ENCODE measurements at regions of chr12 and their contacts with region 1.

Region 1: DNA sequence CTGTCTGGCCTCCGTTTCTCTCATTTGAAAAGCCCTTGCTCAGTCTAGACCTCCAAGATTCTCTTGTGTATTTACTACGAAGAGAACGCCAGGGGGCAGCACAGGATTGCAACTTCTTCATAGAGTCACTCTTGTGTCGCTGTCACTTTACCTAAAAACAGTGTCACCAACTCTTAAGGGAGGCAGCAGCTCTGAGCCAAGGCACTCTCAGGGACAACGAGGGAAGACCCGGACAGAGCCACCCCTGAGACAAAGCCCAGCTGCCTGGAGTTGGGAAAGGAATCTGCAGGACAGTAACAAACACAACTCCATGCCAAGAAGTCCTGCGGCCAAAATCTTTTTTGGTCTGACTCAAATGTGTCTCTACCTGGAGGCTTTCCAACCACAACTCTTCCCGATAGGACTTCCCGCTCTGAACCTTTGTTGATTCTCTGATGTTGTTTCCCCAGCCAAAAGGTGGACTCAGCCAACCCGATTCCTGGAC is 9.6 kb upstream of the RPAP3 start:
- DNase-seq: peak; percentile 64 to 91 (median 78)
- ATAC-seq: peak; percentile 72
- H3K4me3 ChIP-seq: no peak overlapping the region
- H3K4me3 Mint-ChIP-seq: peak overlapping the region; percentile 48
- H3K27ac ChIP-seq: no peak overlapping the region
- H3K27ac Mint-ChIP-seq: peak overlapping the region; percentile 21
- H3K4me1 ChIP-seq: peaks cover 31% of the 10 kb centered on the region
- H3K4me1 Mint-ChIP-seq: peaks cover 26% of the 10 kb centered on the region
- H3K27me3 ChIP-seq: no peaks in the 10 kb centered on the region
- H3K27me3 Mint-ChIP-seq: no peaks in the 10 kb centered on the region
- CTCF ChIP-seq: peak; percentile 80

Region 2: GRCh38 chr12:47742253-47742825 is 26.9 kb after region 1 on chr12:
- CTCF ChIA-PET with region 1: interaction called, 10 read pairs
- POLR2A ChIA-PET with region 1: interaction called, 5 read pairs
- intact Hi-C with region 1: loop called in 1 of 2 experiments (anchors 2 kb)
- DNase-seq: peak; percentile 57 to 83 (median 68)
- ATAC-seq: peak; percentile 38
- H3K4me3 ChIP-seq: no peak overlapping the region
- H3K4me3 Mint-ChIP-seq: no peak overlapping the region
- H3K27ac ChIP-seq: no peak overlapping the region
- H3K27ac Mint-ChIP-seq: no peak overlapping the region
- H3K4me1 ChIP-seq: peaks cover 38% of the 10 kb centered on the region
- H3K4me1 Mint-ChIP-seq: peaks cover 42% of the 10 kb centered on the region
- H3K27me3 ChIP-seq: no peaks in the 10 kb centered on the region
- H3K27me3 Mint-ChIP-seq: no peaks in the 10 kb centered on the region
- CTCF ChIP-seq: peak; percentile 100

Region 3: DNA sequence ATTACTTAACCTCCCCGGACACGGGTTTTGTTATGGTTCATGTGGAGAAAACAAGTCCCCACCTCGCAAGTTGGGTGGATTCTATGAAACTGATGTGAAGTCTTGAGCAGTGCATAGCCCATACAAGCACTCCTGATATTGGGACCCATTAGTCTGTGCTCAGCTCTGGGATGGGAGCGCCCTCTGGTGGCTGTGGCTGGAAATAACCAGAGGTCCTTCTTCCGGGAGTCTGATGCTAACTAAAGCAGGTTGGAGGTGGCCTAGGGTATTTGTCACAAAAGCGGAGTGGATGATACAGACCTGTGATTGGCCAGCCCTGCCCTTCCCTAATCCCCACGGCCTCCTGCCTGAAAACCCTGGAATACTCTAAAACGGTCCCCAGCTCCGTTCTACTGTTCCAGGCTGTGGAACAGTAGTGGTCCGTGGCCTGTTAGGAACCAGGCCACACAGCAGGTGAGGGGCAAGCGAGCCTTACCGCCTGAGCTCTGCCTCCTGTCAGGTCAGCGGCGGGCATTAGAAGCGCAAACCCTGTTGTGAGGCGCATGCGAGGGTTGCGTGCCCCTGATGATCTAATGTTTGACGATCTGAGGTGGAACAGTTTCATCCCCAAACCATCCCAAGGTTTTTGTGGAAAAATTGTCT is 64.0 kb after region 1 on chr12:
- CTCF ChIA-PET with region 1: interaction called, 6 read pairs
- POLR2A ChIA-PET with region 1: interaction called, 5 read pairs
- intact Hi-C with region 1: loop called (anchors 1 to 2 kb)
- DNase-seq: peak; percentile 85 to 98 (median 92)
- ATAC-seq: peak; percentile 99
- H3K4me3 ChIP-seq: no peak overlapping the region
- H3K4me3 Mint-ChIP-seq: peak overlapping the region; percentile 26
- H3K27ac ChIP-seq: no peak overlapping the region
- H3K27ac Mint-ChIP-seq: peak overlapping the region; percentile 61
- H3K4me1 ChIP-seq: peaks cover 27% of the 10 kb centered on the region
- H3K4me1 Mint-ChIP-seq: peaks cover 20% of the 10 kb centered on the region
- H3K27me3 ChIP-seq: no peaks in the 10 kb centered on the region
- H3K27me3 Mint-ChIP-seq: no peaks in the 10 kb centered on the region
- CTCF ChIP-seq: peak; percentile 86

Region 4: DNA sequence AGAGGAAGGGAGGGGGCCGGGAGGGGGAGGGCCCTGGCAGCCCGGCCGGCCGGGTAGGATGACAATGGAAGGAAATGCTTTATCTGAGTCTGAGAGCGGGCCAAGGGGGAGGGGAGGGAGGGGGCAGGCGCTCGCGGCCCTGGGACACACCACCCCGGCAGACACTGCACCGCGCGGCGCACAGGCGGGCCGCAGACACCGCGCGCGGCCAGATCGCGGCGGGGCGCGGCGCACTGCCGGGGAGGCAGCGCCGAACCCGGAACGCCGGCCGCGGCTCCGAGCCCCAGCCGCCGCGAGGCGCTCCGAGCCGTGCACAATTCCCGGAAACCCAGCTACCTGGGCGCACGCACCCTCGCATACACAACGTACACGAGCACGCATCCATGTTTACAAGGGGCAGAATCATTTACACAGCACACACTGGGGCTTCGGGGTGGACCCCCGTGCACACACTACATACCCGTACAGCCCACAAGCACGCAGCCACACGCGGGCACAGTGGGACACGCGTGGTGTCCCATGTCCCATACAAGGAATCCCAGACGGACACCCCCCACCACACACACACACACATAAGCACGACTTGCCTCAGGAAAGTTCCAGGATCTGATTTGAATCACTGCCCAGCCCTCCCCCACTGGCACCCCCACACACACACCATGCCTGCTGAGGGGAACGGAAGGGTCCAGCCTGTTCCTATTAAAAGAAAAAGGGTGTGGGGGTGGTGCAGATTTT is 104.6 kb after region 1 on chr12 and contains the start of gene HDAC7:
- CTCF ChIA-PET with region 1: no interaction called
- POLR2A ChIA-PET with region 1: no interaction called
- intact Hi-C with region 1: no loop called
- DNase-seq: peak in 13 of 14 experiments; percentile 62 to 90 (median 78)
- ATAC-seq: peak; percentile 59
- H3K4me3 ChIP-seq: peak within 1 kb of the TSS; percentile 89
- H3K4me3 Mint-ChIP-seq: peak within 1 kb of the TSS; percentile 98
- H3K27ac ChIP-seq: peak within 1 kb of the TSS; percentile 84 to 89
- H3K27ac Mint-ChIP-seq: peak within 1 kb of the TSS; percentile 96
- H3K4me1 ChIP-seq: peaks cover 81% of the 10 kb centered on the region
- H3K4me1 Mint-ChIP-seq: peaks cover 89% of the 10 kb centered on the region
- H3K27me3 ChIP-seq: no peaks in the 10 kb centered on the region
- H3K27me3 Mint-ChIP-seq: no peaks in the 10 kb centered on the region
- CTCF ChIP-seq: no peak
- total RNA-seq, gene HDAC7: 116 to 122 TPM

Region 5: DNA sequence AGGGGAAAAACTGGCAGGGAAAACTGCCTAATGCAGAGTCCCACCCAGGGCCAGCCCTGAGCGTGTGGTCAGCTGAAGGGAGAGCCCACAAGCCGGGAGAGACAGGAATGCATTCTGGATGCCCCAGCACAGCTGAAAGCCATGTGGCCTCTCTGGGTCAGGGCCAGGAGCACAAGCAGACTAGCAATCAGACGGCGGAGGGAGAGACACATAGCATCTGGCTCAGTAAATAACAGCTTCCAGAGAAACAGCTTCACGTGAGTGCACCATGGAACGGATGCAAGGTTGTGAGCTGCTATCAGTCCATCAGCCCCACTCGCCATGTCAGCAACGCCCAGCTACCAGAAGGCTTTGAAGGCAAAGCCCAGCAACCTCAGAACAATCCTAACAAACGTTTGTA is 219.7 kb after region 1 on chr12:
- CTCF ChIA-PET with region 1: no interaction called
- POLR2A ChIA-PET with region 1: no interaction called
- intact Hi-C with region 1: no loop called
- DNase-seq: no peak
- ATAC-seq: no peak
- H3K4me3 ChIP-seq: no peak overlapping the region
- H3K4me3 Mint-ChIP-seq: no peak overlapping the region
- H3K27ac ChIP-seq: no peak overlapping the region
- H3K27ac Mint-ChIP-seq: no peak overlapping the region
- H3K4me1 ChIP-seq: no peaks in the 10 kb centered on the region
- H3K4me1 Mint-ChIP-seq: no peaks in the 10 kb centered on the region
- H3K27me3 ChIP-seq: no peaks in the 10 kb centered on the region
- H3K27me3 Mint-ChIP-seq: peaks cover 3% of the 10 kb centered on the region
- CTCF ChIP-seq: no peak

Region 6: GRCh38 chr12:47963340-47964040 is 248.1 kb after region 1 on chr12 and contains the start of gene TMEM106C:
- CTCF ChIA-PET with region 1: no interaction called
- POLR2A ChIA-PET with region 1: no interaction called
- intact Hi-C with region 1: loop called in 1 of 2 experiments (anchors 5 kb)
- DNase-seq: peak; percentile 84 to 97 (median 90)
- ATAC-seq: peak; percentile 97
- H3K4me3 ChIP-seq: peak within 1 kb of the TSS; percentile 85
- H3K4me3 Mint-ChIP-seq: peak within 1 kb of the TSS; percentile 95
- H3K27ac ChIP-seq: no peak within 1 kb of the TSS
- H3K27ac Mint-ChIP-seq: peak within 1 kb of the TSS; percentile 81
- H3K4me1 ChIP-seq: peaks cover 17% of the 10 kb centered on the region
- H3K4me1 Mint-ChIP-seq: peaks cover 38% of the 10 kb centered on the region
- H3K27me3 ChIP-seq: peaks cover 0 to 5% of the 10 kb centered on the region in 2 experiments
- H3K27me3 Mint-ChIP-seq: peaks cover 6% of the 10 kb centered on the region
- CTCF ChIP-seq: peak; percentile 97
- total RNA-seq, gene TMEM106C: 17.4 to 20.3 TPM

Region 7: DNA sequence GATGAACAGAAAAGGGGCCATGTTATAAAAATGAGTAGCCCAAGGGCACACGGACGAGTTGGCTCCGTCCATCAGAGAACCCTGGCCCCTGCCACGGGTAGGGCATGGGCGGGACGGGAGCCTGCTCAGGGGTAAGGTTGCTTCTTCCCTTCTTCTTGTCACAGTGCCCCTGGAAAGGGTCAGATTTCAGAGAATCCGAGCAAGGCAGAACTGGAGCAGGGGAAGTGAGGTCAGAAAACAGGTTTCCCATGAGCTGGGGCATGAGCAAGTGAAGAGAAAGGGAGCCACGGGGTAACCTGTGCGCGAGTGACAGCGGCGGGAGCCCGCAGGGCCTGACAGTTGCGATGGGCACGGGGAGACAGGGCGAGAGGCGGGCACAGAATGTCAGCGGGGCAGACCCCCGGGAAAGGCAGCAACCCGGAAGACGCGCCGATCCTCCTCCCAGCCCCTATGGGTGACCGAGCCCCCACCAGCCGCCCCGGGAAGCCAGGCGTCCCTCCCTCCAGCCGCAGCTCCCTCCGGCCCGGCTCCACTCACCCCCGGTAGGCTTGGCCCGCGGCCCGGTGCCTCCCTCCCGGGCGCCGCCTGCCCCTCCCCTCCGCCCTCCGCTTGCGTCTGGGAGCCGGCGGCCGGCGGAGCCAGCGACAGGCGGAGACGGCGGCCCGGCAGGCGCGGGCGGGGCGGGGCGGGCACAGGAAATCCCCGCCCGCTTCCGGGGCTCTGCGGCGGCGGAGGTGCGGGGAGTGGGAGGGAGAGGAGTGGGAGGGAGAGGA is 635.0 kb after region 1 on chr12 and contains the start of gene ZNF641:
- CTCF ChIA-PET with region 1: no interaction called
- POLR2A ChIA-PET with region 1: no interaction called
- intact Hi-C with region 1: loop called in 1 of 2 experiments (anchors 10 kb)
- DNase-seq: peak; percentile 68 to 94 (median 80)
- ATAC-seq: peak; percentile 88
- H3K4me3 ChIP-seq: peak within 1 kb of the TSS; percentile 96
- H3K4me3 Mint-ChIP-seq: peak within 1 kb of the TSS; percentile 97
- H3K27ac ChIP-seq: peak within 1 kb of the TSS; percentile 70 to 81
- H3K27ac Mint-ChIP-seq: peak within 1 kb of the TSS; percentile 98
- H3K4me1 ChIP-seq: peaks cover 19% of the 10 kb centered on the region
- H3K4me1 Mint-ChIP-seq: peaks cover 47% of the 10 kb centered on the region
- H3K27me3 ChIP-seq: no peaks in the 10 kb centered on the region
- H3K27me3 Mint-ChIP-seq: no peaks in the 10 kb centered on the region
- CTCF ChIP-seq: no peak
- total RNA-seq, gene ZNF641: 16.6 to 19.8 TPM

Region 8: DNA sequence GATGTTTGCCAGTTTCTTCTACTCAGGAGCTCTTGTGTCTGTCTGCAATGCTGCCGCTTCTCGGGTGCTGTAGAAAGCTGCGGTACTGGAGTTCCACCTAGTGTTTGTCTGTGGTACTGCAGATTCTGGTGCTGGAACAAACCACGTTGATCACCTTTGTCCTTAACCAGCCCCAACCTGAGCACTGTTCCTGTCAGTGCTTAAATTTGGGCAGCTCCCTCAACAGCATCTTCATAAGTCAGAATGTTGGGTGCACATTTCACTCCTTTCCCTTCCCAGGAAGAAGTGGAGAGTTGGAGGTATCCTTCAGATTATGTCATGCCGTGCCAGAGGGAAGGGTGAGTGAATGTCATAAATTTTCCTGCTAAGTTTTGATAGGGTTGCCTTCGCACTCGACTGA is 903.1 kb after region 1 on chr12:
- CTCF ChIA-PET with region 1: no interaction called
- POLR2A ChIA-PET with region 1: no interaction called
- intact Hi-C with region 1: loop called in 1 of 2 experiments (anchors 10 kb)
- DNase-seq: peak; percentile 51 to 87 (median 68)
- ATAC-seq: peak; percentile 95
- H3K4me3 ChIP-seq: no peak overlapping the region
- H3K4me3 Mint-ChIP-seq: no peak overlapping the region
- H3K27ac ChIP-seq: no peak overlapping the region
- H3K27ac Mint-ChIP-seq: no peak overlapping the region
- H3K4me1 ChIP-seq: no peaks in the 10 kb centered on the region
- H3K4me1 Mint-ChIP-seq: no peaks in the 10 kb centered on the region
- H3K27me3 ChIP-seq: peaks cover 0 to 11% of the 10 kb centered on the region in 2 experiments
- H3K27me3 Mint-ChIP-seq: peaks cover 54% of the 10 kb centered on the region
- CTCF ChIP-seq: peak; percentile 95

Measured in CD4-positive, alpha-beta T cell (primary cell).